Activated CD8-positive, alpha-beta memory T cell treated with anti-CD3 and anti-CD28 coated beads, Interleukin-2, amount 10 ng/mL, durations not matched to agents 7 days and 5 days (primary cell): ENCODE measurements at regions of chr2 and their contacts with region 1.

Region 1: DNA sequence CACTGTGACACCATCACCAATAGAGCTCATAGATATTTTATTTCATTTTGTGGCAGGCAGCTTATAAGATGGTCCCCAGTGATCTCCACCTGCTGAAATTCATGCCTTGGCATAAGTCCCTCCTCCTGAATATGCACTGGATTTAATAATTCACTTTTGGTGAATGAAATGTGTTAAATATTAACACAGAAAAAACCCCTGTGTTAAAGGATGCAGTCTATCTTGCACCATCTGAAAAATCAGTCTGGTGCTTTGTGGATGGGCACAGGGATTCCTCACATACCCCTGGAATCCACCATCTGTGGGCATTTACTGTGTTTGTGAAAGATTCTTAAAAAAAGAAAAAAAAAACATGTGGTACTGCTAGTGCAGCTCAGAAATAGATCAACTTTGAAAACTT is 26.1 kb upstream of the WIPF1 start:
- DNase-seq: no peak
- ATAC-seq: no peak
- H3K4me3 Mint-ChIP-seq: no peak overlapping the region
- H3K27ac Mint-ChIP-seq: peak overlapping the region; percentile 62
- H3K4me1 Mint-ChIP-seq: peaks cover 77% of the 10 kb centered on the region
- H3K27me3 Mint-ChIP-seq: no peaks in the 10 kb centered on the region

Region 2: DNA sequence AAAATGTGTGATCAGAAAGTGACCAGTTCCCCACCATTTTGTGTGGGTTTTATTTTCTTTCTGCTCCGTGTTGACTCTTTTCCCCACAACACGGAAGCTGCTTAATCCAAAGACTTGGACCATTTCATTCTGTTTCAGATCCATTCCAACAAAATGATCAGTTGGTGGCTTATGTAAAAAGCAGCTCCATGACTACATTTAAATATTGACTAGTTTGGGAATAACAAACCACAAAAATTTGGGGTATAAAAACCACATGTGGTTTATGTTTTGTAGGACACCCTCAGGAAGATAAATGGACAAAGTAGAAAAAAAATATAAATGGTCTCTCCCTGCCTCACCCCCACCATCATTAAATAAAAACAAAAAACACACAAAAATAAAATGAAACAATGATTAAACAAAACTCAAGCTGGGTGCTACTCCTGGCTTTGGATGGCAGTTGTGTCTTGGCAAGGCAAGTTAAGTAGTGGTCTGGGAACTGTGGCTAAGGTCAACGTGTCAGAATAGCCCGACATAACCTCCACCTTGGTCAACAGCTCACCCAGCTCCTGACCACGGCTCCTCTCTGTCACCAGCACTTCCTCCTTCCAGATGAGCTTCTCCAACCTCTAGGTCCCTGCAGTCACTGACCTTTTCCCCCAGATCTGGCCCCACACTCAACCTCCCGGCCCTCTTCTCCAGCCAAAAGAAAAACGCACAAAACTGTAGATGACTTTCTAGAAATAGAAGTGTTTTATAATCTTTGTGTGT is 13.3 kb before region 1 on chr2:
- CTCF ChIA-PET with region 1: interaction called, 17 read pairs
- DNase-seq: peak; percentile 69
- ATAC-seq: peak; percentile 28
- H3K4me3 Mint-ChIP-seq: peak overlapping the region; percentile 54
- H3K27ac Mint-ChIP-seq: peak overlapping the region; percentile 92
- H3K4me1 Mint-ChIP-seq: peaks cover 90% of the 10 kb centered on the region
- H3K27me3 Mint-ChIP-seq: no peaks in the 10 kb centered on the region

Region 3: GRCh38 chr2:174663550-174663949 is 39.9 kb after region 1 on chr2:
- CTCF ChIA-PET with region 1: no interaction called
- DNase-seq: no peak
- ATAC-seq: no peak
- H3K4me3 Mint-ChIP-seq: no peak overlapping the region
- H3K27ac Mint-ChIP-seq: no peak overlapping the region
- H3K4me1 Mint-ChIP-seq: peaks cover 32% of the 10 kb centered on the region
- H3K27me3 Mint-ChIP-seq: no peaks in the 10 kb centered on the region